Tibial artery (tissue), 4 donors: ENCODE measurements at regions of chr14 and their contacts with region 1.

Region 1: DNA sequence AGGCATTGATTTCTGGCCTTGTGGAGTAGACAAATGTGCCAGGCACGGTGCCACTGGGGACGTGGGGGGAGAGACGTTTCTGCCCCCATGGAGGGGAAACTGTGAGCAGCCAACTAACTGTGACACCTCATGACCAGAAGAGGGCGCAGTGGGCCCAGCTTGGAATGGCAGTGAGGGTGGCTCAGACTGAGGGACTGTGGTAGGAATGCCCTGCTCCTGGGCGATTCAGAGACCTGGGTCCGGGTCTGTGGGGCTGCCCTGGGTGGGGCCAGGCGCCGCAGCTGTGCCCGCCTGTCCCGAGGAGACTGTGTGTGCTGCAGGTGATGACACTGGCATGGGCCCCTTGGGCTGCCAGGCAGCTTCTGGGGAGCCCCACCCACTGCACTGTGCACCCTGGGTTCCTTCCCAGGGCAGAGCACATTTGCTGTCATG is 60.6 kb downstream of the SLC25A47 start:
- DNase-seq: peak in 1 of 2 donors; percentile 34
- H3K4me3 ChIP-seq: no peak overlapping the region
- H3K27ac ChIP-seq: no peak overlapping the region
- H3K4me1 ChIP-seq: peaks cover 0 to 6% (median 0%) of the 10 kb centered on the region in 4 donors
- H3K27me3 ChIP-seq: no peaks in the 10 kb centered on the region
- CTCF ChIP-seq: peak; percentile 54 to 71

Region 2: DNA sequence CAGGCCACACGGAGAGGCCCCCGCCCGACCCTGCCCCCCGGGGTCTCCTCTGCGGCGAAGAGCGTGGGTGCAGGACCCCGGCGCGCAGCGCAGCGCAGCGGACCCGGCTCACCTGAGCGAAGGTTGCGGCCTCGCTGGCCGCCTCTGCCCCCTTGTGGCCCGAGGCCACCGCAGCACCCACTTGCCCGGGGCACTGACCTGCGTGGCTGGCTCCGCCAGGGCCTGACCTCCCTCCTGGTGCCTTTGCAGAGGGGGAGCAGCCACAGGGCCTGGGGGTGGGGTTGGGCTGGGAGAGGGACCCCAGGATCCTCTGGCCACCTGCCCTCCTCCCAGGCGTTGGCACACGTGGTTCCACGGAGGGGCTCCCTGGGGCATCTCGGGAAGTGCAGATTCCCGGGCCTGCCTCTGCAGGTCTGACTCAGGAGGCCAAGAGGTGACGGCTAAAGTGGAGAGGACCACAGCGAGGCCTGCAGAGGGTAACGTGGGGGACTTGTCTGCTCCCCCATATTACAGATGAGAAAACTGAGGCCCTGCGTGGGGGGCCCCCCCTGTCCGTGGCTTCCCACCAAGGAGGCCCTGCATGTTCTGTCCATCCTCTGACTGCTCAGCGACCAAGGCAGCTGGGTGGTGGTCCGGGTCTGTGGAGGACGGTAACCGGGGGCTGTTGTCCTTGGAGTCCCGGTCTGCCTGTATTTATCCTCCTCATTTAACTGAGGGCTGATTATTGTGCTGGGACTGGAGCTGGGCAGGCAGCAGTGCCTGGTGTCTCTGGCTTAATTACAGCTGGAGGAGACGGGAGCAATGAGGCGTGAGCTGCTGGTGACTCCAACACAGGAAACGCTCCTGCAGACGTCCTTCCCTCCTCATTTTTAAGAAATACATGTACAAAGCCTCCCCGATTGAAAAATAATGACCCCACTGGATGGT is 271.3 kb after region 1 on chr14:
- intact Hi-C with region 1: loop called (anchors 10 kb)
- DNase-seq: no peak
- H3K4me3 ChIP-seq: no peak overlapping the region
- H3K27ac ChIP-seq: no peak overlapping the region
- H3K4me1 ChIP-seq: peaks cover 0 to 5% (median 0%) of the 10 kb centered on the region in 4 donors
- H3K27me3 ChIP-seq: peaks cover 0 to 63% of the 10 kb centered on the region in 2 donors
- CTCF ChIP-seq: peak; percentile 30 to 37